ENCODE measurements at regions of chr7 and their contacts with region 1.

Region 1: DNA sequence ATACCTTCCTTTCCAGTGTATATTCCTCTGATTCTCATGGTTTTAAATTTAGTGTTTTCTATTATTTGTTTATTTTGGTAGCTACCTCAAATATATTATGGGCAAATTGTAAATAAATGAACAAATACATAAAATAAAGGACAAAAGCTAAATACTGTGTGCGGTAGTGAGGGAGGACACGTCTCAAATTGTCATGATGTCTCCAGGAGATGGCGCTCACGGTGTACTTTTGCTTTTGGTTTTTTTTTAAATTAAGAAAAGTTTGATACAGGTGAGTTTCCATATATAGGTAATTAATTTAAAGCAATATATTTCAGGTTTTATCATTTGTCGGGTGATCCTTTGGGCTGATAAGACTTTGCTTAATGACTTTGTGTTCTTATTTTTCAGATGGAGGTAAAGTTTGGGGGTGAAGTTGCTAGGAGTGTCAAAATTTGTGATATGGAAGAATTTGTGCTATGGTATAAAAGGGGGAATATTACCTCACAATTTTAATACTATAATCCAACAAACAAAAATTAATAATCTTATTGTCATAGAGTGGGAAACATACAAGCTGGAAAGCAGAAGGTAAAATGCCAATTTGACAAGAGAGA is 68.4 kb upstream of the TMEM229A start:
- DNase-seq: peak; percentile 63
- H3K4me3 Mint-ChIP-seq: no peak overlapping the region
- H3K27ac Mint-ChIP-seq: no peak overlapping the region
- H3K4me1 Mint-ChIP-seq: peaks cover 9% of the 10 kb centered on the region
- H3K27me3 Mint-ChIP-seq: no peaks in the 10 kb centered on the region
- CTCF ChIP-seq: peak; percentile 54

Region 2: GRCh38 chr7:123748734-123749536 is 352.3 kb before region 1 on chr7 and contains the start of gene WASL:
- CTCF ChIA-PET with region 1: no interaction called
- POLR2A ChIA-PET with region 1: no interaction called
- intact Hi-C with region 1: no loop called
- DNase-seq: peak; percentile 87
- H3K4me3 Mint-ChIP-seq: peak within 1 kb of the TSS; percentile 98
- H3K27ac Mint-ChIP-seq: peak within 1 kb of the TSS; percentile 99
- H3K4me1 Mint-ChIP-seq: peaks cover 44% of the 10 kb centered on the region
- H3K27me3 Mint-ChIP-seq: no peaks in the 10 kb centered on the region
- CTCF ChIP-seq: no peak
- total RNA-seq, gene WASL: 34.7 and 38.8 TPM in 2 replicates

Region 3: GRCh38 chr7:124085179-124085578 is 16.1 kb before region 1 on chr7:
- CTCF ChIA-PET with region 1: interaction called, 14 read pairs
- POLR2A ChIA-PET with region 1: interaction called, 4 read pairs
- intact Hi-C with region 1: no loop called
- DNase-seq: peak; percentile 88
- H3K4me3 Mint-ChIP-seq: peak overlapping the region; percentile 37
- H3K27ac Mint-ChIP-seq: peak overlapping the region; percentile 59
- H3K4me1 Mint-ChIP-seq: peaks cover 17% of the 10 kb centered on the region
- H3K27me3 Mint-ChIP-seq: no peaks in the 10 kb centered on the region
- CTCF ChIP-seq: no peak

Region 4: DNA sequence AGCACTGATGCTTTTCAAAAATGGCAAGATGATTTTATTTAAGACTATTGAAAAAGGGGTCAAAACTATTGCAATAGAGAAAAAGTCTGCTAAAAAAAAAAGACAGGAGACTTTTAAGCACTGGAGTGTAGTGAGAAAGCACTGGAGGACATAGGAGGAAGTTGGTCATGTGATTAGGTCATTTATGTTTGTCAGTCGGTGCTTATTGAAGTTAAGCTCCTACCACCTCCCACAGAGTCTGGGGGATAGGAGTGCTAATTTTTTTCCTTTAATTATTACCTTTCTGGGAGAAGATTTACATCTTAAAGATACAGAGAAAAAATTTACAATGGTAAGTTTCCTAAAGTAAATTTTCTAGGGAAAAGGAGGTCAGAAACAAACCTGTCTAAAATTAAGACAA is 11.8 kb after region 1 on chr7:
- CTCF ChIA-PET with region 1: interaction called, 18 read pairs
- POLR2A ChIA-PET with region 1: interaction called, 3 read pairs
- intact Hi-C with region 1: no loop called
- DNase-seq: no peak
- H3K4me3 Mint-ChIP-seq: no peak overlapping the region
- H3K27ac Mint-ChIP-seq: no peak overlapping the region
- H3K4me1 Mint-ChIP-seq: no peaks in the 10 kb centered on the region
- H3K27me3 Mint-ChIP-seq: no peaks in the 10 kb centered on the region
- CTCF ChIP-seq: no peak

Region 5: GRCh38 chr7:124152859-124153692 is 51.8 kb after region 1 on chr7:
- CTCF ChIA-PET with region 1: interaction called, 36 read pairs
- POLR2A ChIA-PET with region 1: interaction called, 3 read pairs
- intact Hi-C with region 1: loop called (anchors 10 kb)
- DNase-seq: peak; percentile 62
- H3K4me3 Mint-ChIP-seq: no peak overlapping the region
- H3K27ac Mint-ChIP-seq: peak overlapping the region; percentile 75
- H3K4me1 Mint-ChIP-seq: peaks cover 9% of the 10 kb centered on the region
- H3K27me3 Mint-ChIP-seq: no peaks in the 10 kb centered on the region
- CTCF ChIP-seq: peak; percentile 29

Region 6: GRCh38 chr7:124765401-124766352 is 664.4 kb after region 1 on chr7 and contains the start of gene GPR37:
- CTCF ChIA-PET with region 1: interaction called, 20 read pairs
- POLR2A ChIA-PET with region 1: no interaction called
- intact Hi-C with region 1: no loop called
- DNase-seq: peak; percentile 92
- H3K4me3 Mint-ChIP-seq: peak within 1 kb of the TSS; percentile 75
- H3K27ac Mint-ChIP-seq: peak within 1 kb of the TSS; percentile 73
- H3K4me1 Mint-ChIP-seq: peaks cover 12% of the 10 kb centered on the region
- H3K27me3 Mint-ChIP-seq: no peaks in the 10 kb centered on the region
- CTCF ChIP-seq: peak; percentile 63
- total RNA-seq, gene GPR37: 1.9 TPM in 2 replicates

Region 7: DNA sequence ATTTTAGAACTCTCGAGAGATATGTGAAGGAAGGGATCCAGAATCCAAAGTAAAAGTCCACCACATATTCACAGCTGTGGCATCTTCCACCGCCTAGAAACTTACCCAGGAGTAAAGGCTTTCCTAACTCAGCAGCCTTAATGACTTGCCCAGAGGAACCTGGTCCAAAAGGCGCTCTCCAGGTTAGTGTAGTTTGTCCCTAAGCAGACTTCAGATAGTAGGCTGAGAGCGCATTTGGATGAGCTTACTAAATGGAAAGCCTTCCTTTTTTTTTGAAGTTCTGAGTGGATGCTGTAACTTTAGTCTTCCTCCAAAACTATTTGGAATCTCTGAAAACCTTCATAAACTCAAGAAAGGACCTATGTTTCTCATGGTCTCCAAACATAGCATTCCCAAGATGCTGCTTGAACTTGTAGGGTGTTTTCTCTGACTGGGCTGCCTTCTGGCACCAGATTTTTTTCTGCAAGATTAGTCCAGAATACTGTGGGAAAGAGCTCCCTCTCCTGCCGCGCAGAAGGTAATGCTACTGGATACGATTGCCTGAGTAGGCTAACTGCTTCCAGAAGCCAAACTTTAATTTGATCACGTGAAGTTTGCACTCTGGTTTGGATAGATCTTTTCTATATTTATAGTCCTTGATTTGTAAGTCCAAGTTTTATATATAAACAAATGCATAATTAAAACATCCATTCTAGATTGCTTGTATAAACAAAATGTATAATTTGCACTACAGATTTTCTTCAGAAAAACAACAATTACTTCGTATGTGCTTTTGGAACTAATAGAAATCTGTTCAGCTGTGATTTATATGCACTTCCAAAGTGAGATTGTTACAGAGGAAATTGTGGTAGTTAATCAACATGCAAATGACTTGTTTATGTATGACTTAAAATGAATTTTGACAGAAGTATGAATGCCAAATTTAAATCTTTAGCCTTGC is 683.9 kb after region 1 on chr7:
- CTCF ChIA-PET with region 1: interaction called, 20 read pairs
- POLR2A ChIA-PET with region 1: no interaction called
- intact Hi-C with region 1: loop called (anchors 1 kb)
- DNase-seq: peak; percentile 64
- H3K4me3 Mint-ChIP-seq: no peak overlapping the region
- H3K27ac Mint-ChIP-seq: no peak overlapping the region
- H3K4me1 Mint-ChIP-seq: no peaks in the 10 kb centered on the region
- H3K27me3 Mint-ChIP-seq: no peaks in the 10 kb centered on the region
- CTCF ChIP-seq: peak; percentile 91

Region 8: DNA sequence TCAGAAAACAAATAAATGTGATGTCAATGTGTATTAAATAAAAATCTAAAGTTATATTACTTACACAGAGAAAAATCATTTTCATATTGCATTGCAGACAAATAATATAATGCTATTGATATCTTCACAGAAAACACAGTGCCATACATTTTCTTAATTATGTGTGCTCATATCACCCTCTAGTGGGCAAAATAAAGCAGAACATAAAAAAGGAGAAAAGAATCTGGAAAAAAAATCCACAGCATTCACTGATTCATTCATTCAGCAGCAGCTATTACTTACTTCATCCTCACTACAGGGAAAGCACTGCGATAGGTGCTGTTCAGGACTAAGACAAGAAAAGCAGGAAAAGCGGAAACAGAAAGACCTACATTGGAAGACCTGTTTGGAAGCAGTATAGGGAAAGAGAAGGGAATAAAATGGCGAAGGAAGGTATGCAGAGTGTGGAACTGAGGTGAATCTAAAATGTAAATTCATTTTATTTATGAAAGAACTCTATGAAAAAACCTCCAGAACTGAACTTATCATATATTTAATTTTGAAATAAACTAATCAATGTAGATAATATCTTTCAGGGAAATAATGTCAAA is 755.1 kb after region 1 on chr7:
- CTCF ChIA-PET with region 1: interaction called, 15 read pairs
- POLR2A ChIA-PET with region 1: no interaction called
- intact Hi-C with region 1: loop called (anchors 1 kb)
- DNase-seq: peak; percentile 52
- H3K4me3 Mint-ChIP-seq: no peak overlapping the region
- H3K27ac Mint-ChIP-seq: no peak overlapping the region
- H3K4me1 Mint-ChIP-seq: peaks cover 6% of the 10 kb centered on the region
- H3K27me3 Mint-ChIP-seq: no peaks in the 10 kb centered on the region
- CTCF ChIP-seq: peak; percentile 47